Endothelial cell of umbilical vein (primary cell): ENCODE measurements at regions of chr14 and their contacts with region 1.

Region 1: DNA sequence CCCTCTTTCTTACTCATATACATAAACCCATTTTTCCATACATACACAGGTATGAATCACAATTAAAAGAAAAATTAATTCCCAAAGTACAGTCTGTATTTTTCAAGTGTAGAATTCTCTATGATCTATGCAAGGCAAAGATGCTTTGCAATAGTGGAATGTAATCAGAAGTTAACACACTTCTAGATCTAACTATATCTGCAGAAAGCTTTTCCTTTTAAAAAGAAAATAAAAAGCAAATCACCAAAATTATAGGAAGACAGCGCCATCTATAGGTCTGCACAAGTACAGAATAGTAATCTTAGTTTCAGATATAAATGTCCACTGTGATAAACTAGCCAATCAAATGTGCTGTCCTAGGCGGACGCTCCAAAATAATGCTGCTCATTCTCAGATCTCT is 22.0 kb downstream of the SLC25A21 start:
- DNase-seq: peak; percentile 58
- H3K4me3 ChIP-seq: no peak overlapping the region
- H3K27ac ChIP-seq: no peak overlapping the region
- H3K4me1 ChIP-seq: no peaks in the 10 kb centered on the region
- H3K27me3 ChIP-seq: peaks cover 0 to 2% of the 10 kb centered on the region in 2 experiments
- CTCF ChIP-seq: peak; percentile 55 to 59
- POLR2A ChIP-seq: no peak

Region 2: DNA sequence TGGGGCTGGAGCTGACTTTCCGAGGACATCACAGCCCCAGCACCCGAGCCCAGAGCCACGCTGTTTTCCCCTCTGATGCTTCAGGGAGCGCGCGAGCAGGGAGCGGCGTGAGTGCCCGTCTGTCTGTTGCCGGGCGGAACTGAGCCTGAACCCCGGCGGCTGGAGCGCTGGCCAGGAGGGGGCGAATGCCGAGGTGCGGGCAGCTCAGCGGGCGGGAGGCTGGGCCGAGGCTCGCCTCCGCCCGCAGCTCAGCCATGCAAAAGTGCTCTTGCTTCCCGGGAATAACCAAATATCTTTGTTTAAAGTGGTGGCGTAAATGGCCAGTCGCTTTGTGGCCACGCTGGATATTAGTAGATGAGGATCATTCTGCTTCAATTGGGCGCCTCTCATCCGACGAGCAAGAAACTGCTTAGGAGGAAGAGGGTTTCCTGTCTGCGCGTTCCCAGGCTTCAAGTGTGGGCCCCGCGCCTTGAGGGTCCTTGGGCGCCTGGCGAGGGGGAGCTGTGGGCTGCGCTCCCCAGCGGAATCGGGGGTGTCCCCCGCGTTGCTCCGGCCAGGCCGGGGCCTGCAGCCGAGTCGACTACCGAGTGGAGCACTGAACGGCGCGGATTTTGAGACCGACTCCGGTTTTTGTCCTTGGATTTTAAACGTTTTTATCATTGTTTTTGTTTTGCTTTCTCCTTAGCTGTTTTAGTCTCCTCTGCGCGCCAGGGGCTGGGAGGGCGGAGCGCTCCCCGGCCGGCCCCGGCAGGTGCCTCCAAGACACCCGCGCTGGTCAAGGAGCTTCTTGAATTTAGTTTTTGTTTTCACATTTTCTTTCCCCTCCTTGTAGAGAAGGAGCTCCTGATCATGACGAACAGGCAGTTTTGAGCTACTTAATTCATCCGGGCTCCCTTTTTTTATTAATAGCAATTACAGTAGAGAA is 629.6 kb before region 1 on chr14:
- CTCF ChIA-PET with region 1: interaction called, 11 read pairs
- POLR2A ChIA-PET with region 1: no interaction called
- dilution Hi-C with region 1: no loop called
- intact Hi-C with region 1: no loop called
- DNase-seq: peak; percentile 6
- H3K4me3 ChIP-seq: no peak overlapping the region
- H3K27ac ChIP-seq: no peak overlapping the region
- H3K4me1 ChIP-seq: peaks cover 6% of the 10 kb centered on the region
- H3K27me3 ChIP-seq: peaks cover 90 to 99% of the 10 kb centered on the region in 2 experiments
- CTCF ChIP-seq: peak; percentile 18 to 45
- POLR2A ChIP-seq: no peak

Region 3: GRCh38 chr14:36747411-36748184 is 402.8 kb before region 1 on chr14:
- CTCF ChIA-PET with region 1: interaction called, 12 read pairs
- POLR2A ChIA-PET with region 1: no interaction called
- dilution Hi-C with region 1: no loop called
- intact Hi-C with region 1: loop called (anchors 5 kb)
- DNase-seq: peak; percentile 14
- H3K4me3 ChIP-seq: no peak overlapping the region
- H3K27ac ChIP-seq: no peak overlapping the region
- H3K4me1 ChIP-seq: no peaks in the 10 kb centered on the region
- H3K27me3 ChIP-seq: peaks cover 0 to 7% of the 10 kb centered on the region in 2 experiments
- CTCF ChIP-seq: peak; percentile 52 to 54
- POLR2A ChIP-seq: no peak

Region 4: GRCh38 chr14:37023875-37024565 is 126.4 kb before region 1 on chr14:
- CTCF ChIA-PET with region 1: interaction called, 14 read pairs
- POLR2A ChIA-PET with region 1: no interaction called
- dilution Hi-C with region 1: no loop called
- intact Hi-C with region 1: no loop called
- DNase-seq: no peak
- H3K4me3 ChIP-seq: no peak overlapping the region
- H3K27ac ChIP-seq: no peak overlapping the region
- H3K4me1 ChIP-seq: no peaks in the 10 kb centered on the region
- H3K27me3 ChIP-seq: no peaks in the 10 kb centered on the region
- CTCF ChIP-seq: no peak
- POLR2A ChIP-seq: no peak

Region 5: GRCh38 chr14:37139710-37140109 is 10.7 kb before region 1 on chr14:
- CTCF ChIA-PET with region 1: interaction called, 50 read pairs
- POLR2A ChIA-PET with region 1: interaction called, 4 read pairs
- dilution Hi-C with region 1: no loop called
- intact Hi-C with region 1: no loop called
- DNase-seq: no peak
- H3K4me3 ChIP-seq: no peak overlapping the region
- H3K27ac ChIP-seq: no peak overlapping the region
- H3K4me1 ChIP-seq: no peaks in the 10 kb centered on the region
- H3K27me3 ChIP-seq: no peaks in the 10 kb centered on the region
- CTCF ChIP-seq: no peak
- POLR2A ChIP-seq: no peak

Region 6: DNA sequence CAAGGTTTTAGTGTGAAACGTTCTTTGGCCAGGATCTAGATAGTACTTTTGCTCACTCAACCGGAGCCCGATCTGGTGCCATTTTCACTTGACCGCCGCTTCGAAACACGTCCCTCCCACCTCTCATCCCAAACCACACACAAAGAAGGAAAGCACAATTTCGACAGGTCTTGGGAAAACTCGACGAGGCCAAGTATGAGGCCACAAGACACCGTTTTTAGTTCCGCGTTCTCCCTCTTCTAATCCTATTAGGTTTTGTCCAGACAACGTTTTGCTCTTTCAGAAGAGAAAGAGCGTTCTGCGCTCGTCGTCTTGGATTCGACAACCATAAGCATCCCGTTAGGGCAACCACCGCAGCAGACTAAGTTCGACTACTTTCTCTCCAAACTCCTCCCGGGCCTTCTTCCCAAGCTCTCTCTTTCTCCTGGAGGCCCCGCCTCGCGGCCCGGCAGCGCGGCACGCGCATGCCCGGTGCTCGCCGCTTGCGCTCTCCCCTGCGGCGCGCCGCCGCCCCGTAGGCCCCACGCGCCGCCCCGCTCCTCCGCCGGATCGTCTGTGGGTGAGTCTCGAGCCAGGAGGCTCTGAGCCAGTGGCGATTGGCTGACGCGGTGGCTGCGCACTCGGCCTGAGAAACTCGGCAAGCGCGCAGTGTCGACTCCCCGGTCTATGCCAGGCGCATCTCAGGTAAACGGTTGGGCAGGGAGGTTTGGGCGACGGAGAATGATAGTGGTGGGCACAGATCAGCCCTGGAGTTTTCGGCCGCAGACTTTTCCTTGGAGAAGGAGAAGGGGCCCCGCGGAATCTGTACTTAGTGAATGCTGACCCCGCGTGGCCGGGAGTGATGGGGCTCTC is 47.2 kb after region 1 on chr14 and contains the start of gene MIPOL1:
- CTCF ChIA-PET with region 1: interaction called, 17 read pairs
- POLR2A ChIA-PET with region 1: no interaction called
- dilution Hi-C with region 1: no loop called
- intact Hi-C with region 1: loop called (anchors 1 kb)
- DNase-seq: peak; percentile 93
- H3K4me3 ChIP-seq: peak within 1 kb of the TSS; percentile 61 to 86 (median 86)
- H3K27ac ChIP-seq: peak within 1 kb of the TSS; percentile 97
- H3K4me1 ChIP-seq: peaks cover 52% of the 10 kb centered on the region
- H3K27me3 ChIP-seq: no peaks in the 10 kb centered on the region
- CTCF ChIP-seq: peak in 1 of 2 donors; percentile 49
- POLR2A ChIP-seq: peak; percentile 92
- total RNA-seq, gene MIPOL1: 31.3 and 33.5 TPM in 2 replicates

Region 7: GRCh38 chr14:37746140-37746832 is 595.9 kb after region 1 on chr14:
- CTCF ChIA-PET with region 1: no interaction called
- POLR2A ChIA-PET with region 1: no interaction called
- dilution Hi-C with region 1: no loop called
- intact Hi-C with region 1: no loop called
- DNase-seq: no peak
- H3K4me3 ChIP-seq: no peak overlapping the region
- H3K27ac ChIP-seq: no peak overlapping the region
- H3K4me1 ChIP-seq: no peaks in the 10 kb centered on the region
- H3K27me3 ChIP-seq: no peaks in the 10 kb centered on the region
- CTCF ChIP-seq: no peak
- POLR2A ChIP-seq: no peak